Cardiac septum (tissue), 1 donor: ENCODE measurements at regions of chr2 and their contacts with region 1.

Region 1: GRCh38 chr2:224357098-224357901 is 44.6 kb downstream of the FAM124B start:
- DNase-seq: no peak

Region 2: GRCh38 chr2:224650815-224651439 is 293.6 kb after region 1 on chr2:
- intact Hi-C with region 1: loop called (anchors 1 kb)
- DNase-seq: no peak

Region 3: GRCh38 chr2:224778474-224778877 is 421.2 kb after region 1 on chr2:
- intact Hi-C with region 1: loop called (anchors 5 kb)
- DNase-seq: no peak